Cardiac septum (tissue), 1 donor: ENCODE measurements at regions of chr3 and their contacts with region 1.

Region 1: GRCh38 chr3:158801696-158802408 is at the start of gene MFSD1:
- DNase-seq: peak; percentile 99
- total RNA-seq, gene MFSD1: 23.9 TPM

Region 2: GRCh38 chr3:158109804-158110657 is 691.8 kb before region 1 on chr3 and contains the start of gene RSRC1:
- intact Hi-C with region 1: loop called (anchors 10 kb)
- DNase-seq: peak; percentile 94
- total RNA-seq, gene RSRC1: 21.4 TPM

Region 3: DNA sequence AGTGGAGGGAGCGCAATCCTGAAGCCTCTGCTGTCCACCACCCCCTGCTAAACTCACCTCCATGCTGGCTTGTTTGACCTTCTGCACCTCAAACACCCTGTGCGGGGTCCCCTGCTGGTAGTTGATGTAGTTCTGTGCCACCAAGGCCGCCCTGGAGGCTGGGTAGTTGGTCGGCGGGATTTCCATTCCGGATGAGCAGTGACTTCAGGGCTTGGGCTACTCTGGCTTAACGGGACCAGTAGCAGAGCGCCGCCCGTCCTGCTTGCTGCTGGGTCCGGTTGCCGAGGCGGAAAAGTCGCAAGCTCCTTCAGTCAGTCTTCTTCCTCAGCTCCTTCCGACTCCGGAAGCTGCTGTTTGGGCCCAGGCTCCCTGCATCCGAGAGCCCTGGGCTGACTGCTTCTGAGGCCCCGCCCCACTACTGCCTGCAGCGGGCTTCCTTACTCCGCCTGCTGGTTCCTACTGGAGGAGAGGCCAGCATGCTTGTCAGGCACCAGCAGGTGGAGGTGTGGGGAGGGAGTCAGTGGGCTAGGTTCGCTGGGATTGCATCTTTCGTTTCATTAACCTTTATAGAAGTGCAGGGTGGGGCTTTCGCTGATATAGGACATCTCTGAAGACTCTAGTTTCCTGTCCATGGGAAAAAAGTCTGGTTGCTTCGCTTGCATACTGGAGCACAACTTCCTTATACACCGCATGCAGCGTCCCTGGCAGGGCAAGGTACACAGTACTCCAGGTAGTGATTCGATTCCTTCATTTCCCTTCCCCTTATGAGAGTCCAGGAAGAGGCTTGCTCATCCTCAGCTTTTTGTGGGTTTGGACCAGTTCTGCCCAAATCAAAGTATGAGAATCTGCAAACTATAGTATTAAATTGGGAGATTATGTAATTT is 129.3 kb before region 1 on chr3 and contains the start of gene LXN:
- intact Hi-C with region 1: loop called (anchors 5 kb)
- DNase-seq: peak; percentile 93
- total RNA-seq, gene LXN: 3.8 TPM

Region 4: GRCh38 chr3:159001711-159002110 is 199.9 kb after region 1 on chr3:
- intact Hi-C with region 1: no loop called
- DNase-seq: no peak

Region 5: DNA sequence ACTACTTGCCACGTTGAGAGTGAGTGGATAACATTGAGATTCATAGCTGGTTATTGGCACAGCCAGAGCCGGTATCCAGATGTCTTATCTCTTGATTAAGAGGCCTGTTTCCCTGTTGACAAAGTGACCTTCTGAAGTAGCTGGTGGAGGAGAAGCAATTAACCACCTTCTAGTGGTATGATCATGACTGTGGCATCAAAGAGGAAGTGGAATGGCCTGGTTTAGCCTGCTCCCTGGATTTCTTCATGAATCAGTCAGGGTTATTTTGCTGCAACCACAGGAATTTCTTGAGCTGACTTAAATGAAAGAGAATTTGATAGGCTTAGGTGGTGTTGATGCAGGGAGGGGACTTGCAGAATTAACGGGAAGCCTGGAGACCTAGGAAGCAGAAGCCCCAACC is 398.3 kb after region 1 on chr3:
- intact Hi-C with region 1: no loop called
- DNase-seq: no peak